Aorta (tissue), 5 donors: ENCODE measurements at regions of chr5 and their contacts with region 1.

Region 1: DNA sequence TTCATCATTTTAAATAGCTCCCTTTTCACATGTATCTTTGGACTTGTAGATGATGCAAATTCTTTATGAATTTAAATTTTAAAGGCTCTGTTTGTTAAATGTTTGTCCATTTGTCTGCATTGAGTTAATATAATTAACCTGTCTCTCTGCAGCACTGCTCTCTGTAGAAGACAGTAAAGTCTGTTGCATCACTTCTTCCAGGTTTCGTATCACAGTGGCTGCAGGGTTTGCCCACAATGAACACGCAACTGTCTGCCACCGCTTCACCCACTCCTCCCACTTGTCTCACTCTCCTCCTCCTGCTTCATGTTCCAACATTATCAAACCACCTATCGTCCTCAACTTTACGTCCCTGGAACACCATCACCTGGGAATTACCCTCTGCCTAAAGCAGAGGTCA is 231.3 kb upstream of the SLC30A5 start:
- DNase-seq: no peak
- ATAC-seq: no peak
- H3K4me3 ChIP-seq: no peak overlapping the region
- H3K27ac ChIP-seq: no peak overlapping the region
- H3K4me1 ChIP-seq: no peaks in the 10 kb centered on the region
- H3K27me3 ChIP-seq: peaks cover 0 to 4% of the 10 kb centered on the region in 2 donors

Region 2: GRCh38 chr5:68932830-68933434 is 70.4 kb after region 1 on chr5:
- intact Hi-C with region 1: loop called in 1 of 2 experiments (anchors 2 kb)
- DNase-seq: no peak
- ATAC-seq: no peak
- H3K4me3 ChIP-seq: no peak overlapping the region
- H3K27ac ChIP-seq: no peak overlapping the region
- H3K4me1 ChIP-seq: no peaks in the 10 kb centered on the region
- H3K27me3 ChIP-seq: no peaks in the 10 kb centered on the region